ENCODE measurements at regions of chr19 and their contacts with region 1.

Region 1: GRCh38 chr19:45485305-45486077 is 11.4 kb downstream of the RTN2 start:
- DNase-seq: peak; percentile 93 to 97 (median 95)
- H3K4me3 ChIP-seq: peak overlapping the region; percentile 66 to 88
- H3K4me3 Mint-ChIP-seq: peak overlapping the region; percentile 91 to 97 (median 93)
- H3K27ac ChIP-seq: peak overlapping the region; percentile 34
- H3K27ac Mint-ChIP-seq: peak overlapping the region; percentile 72 to 94 (median 89)
- H3K4me1 ChIP-seq: peaks cover 5% of the 10 kb centered on the region
- H3K4me1 Mint-ChIP-seq: peaks cover 0 to 11% (median 7%) of the 10 kb centered on the region in 4 donors
- H3K27me3 ChIP-seq: no peaks in the 10 kb centered on the region
- H3K27me3 Mint-ChIP-seq: peaks cover 2 to 3% of the 10 kb centered on the region in 2 donors

Region 2: DNA sequence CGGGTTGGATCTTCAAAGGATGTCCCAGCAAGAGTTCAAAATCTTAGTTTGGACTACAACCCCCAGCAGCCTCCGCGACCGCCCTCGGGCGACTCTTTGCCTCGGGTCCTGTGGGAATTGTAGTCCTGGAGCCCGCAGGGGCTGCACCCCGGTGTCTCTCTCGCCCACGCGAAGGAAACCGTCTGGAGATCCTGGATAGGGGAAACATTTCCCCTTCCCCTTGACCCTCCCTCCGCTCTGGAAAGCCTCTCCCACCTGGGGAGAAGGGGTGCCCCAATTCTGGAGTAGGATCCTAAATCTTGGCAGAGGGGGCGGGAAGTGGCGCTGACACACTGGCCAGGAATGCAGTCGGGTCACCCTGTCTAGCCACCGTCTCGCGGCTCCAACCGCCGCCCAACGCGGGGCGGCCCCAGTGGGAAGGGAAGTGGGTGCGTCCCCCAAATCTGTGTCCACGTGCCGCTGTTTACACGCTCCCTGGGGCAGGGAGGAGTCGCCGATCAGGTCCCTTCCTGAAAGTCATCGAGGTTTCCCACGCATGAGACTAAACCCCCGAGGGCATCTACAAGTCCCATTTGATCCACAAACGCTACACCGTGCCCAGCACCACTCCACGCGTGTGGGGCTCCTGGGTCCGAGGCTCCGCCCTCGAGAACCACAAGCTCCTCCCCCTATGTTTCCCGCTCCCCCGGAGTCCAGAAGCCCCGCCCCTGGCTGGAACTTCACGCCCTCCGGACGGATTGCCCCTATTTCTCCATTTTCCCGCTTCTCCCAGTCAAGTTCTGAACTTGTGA is 79.9 kb before region 1 on chr19:
- CTCF ChIA-PET with region 1: no interaction called
- POLR2A ChIA-PET with region 1: no interaction called
- intact Hi-C with region 1: loop called (anchors 1 kb)
- DNase-seq: peak; percentile 80 to 91 (median 82)
- H3K4me3 ChIP-seq: peak overlapping the region; percentile 91 to 94
- H3K4me3 Mint-ChIP-seq: peak overlapping the region; percentile 90 to 99 (median 97)
- H3K27ac ChIP-seq: peak overlapping the region; percentile 65
- H3K27ac Mint-ChIP-seq: peak overlapping the region; percentile 69 to 99 (median 96)
- H3K4me1 ChIP-seq: peaks cover 35% of the 10 kb centered on the region
- H3K4me1 Mint-ChIP-seq: peaks cover 13 to 35% (median 26%) of the 10 kb centered on the region in 4 donors
- H3K27me3 ChIP-seq: peaks cover 16% of the 10 kb centered on the region
- H3K27me3 Mint-ChIP-seq: peaks cover 12 to 22% of the 10 kb centered on the region in 2 donors

Region 3: GRCh38 chr19:45450012-45450333 is 35.5 kb before region 1 on chr19:
- CTCF ChIA-PET with region 1: interaction called, 15 read pairs
- POLR2A ChIA-PET with region 1: no interaction called
- intact Hi-C with region 1: no loop called
- DNase-seq: peak in 3 of 5 donors; percentile 61 to 69 (median 64)
- H3K4me3 ChIP-seq: peak overlapping the region; percentile 45 to 50
- H3K4me3 Mint-ChIP-seq: peak overlapping the region; percentile 93 to 97 (median 96)
- H3K27ac ChIP-seq: peak overlapping the region; percentile 99
- H3K27ac Mint-ChIP-seq: peak overlapping the region; percentile 99 to 100 (median 100)
- H3K4me1 ChIP-seq: peaks cover 42% of the 10 kb centered on the region
- H3K4me1 Mint-ChIP-seq: peaks cover 36 to 75% (median 49%) of the 10 kb centered on the region in 4 donors
- H3K27me3 ChIP-seq: no peaks in the 10 kb centered on the region
- H3K27me3 Mint-ChIP-seq: peaks cover 0 to 4% of the 10 kb centered on the region in 2 donors

Region 4: DNA sequence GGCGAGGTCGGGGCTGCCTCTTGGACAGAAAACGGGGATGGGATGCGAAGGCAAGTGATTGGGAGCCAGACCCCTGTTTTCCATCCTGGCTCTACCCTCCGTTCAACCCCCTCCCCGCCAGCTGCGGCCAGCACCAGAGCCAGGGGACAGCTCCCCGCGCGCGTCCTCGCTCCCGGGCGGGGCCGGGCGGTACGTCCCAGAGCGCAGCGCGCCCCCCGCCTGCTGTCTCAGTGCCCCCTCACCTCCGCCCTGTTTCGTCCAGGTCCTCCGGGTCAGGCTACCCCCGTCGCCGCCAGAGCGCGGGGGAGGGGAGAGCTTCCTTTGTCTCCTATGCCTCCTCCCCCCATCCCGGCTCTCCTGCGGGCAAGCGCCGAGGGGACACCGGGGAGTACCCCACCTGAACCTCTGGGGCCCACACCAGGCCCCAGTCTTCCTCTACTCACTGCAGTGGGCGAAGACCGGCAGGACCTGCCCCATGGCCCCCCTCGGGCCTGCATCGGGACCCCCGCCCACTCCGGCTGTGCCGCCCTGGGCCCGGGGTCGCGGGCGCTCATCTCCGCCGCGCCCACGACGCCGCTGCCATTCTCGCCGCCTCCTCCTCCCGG is 11.0 kb after region 1 on chr19:
- CTCF ChIA-PET with region 1: interaction called, 52 read pairs
- POLR2A ChIA-PET with region 1: interaction called, 7 read pairs
- intact Hi-C with region 1: no loop called
- DNase-seq: peak; percentile 26 to 55 (median 44)
- H3K4me3 ChIP-seq: peak overlapping the region; percentile 23 to 54
- H3K4me3 Mint-ChIP-seq: peak overlapping the region; percentile 57 to 79 (median 69)
- H3K27ac ChIP-seq: no peak overlapping the region
- H3K27ac Mint-ChIP-seq: peak overlapping the region in 1 of 7 donors; percentile 91
- H3K4me1 ChIP-seq: peaks cover 44% of the 10 kb centered on the region
- H3K4me1 Mint-ChIP-seq: peaks cover 23 to 58% (median 41%) of the 10 kb centered on the region in 4 donors
- H3K27me3 ChIP-seq: peaks cover 10% of the 10 kb centered on the region
- H3K27me3 Mint-ChIP-seq: peaks cover 5 to 7% of the 10 kb centered on the region in 2 donors

Region 5: DNA sequence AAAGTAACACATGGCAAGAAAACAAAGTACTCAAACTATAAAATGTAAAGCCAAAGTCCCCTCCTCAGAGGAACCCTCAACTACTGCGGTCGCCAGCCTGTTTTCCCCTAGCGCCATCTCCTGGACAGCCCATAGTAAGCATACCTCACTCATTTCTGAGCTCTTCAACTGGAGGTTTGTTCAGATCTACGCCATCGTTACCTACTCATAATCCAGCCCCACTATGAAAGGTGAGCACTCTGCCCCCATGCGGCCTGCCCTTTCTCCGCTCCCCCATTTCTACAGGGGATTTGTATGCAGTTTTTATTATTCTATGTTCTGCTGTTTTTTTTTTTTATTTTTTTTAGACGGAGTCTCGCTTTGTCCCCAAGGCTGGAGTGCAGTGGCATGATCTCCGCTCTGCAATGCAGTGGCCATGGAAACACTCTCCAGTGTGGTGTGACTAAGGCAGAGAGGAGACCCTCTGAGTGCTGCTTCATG is 72.9 kb after region 1 on chr19:
- CTCF ChIA-PET with region 1: interaction called, 11 read pairs
- POLR2A ChIA-PET with region 1: no interaction called
- intact Hi-C with region 1: no loop called
- DNase-seq: peak; percentile 73 to 78 (median 76)
- H3K4me3 ChIP-seq: no peak overlapping the region
- H3K4me3 Mint-ChIP-seq: peak overlapping the region in 1 of 8 donors; percentile 34
- H3K27ac ChIP-seq: no peak overlapping the region
- H3K27ac Mint-ChIP-seq: peak overlapping the region in 4 of 7 donors; percentile 5 to 59 (median 34)
- H3K4me1 ChIP-seq: peaks cover 25% of the 10 kb centered on the region
- H3K4me1 Mint-ChIP-seq: peaks cover 9 to 32% (median 16%) of the 10 kb centered on the region in 4 donors
- H3K27me3 ChIP-seq: no peaks in the 10 kb centered on the region
- H3K27me3 Mint-ChIP-seq: no peaks in the 10 kb centered on the region

Region 6: DNA sequence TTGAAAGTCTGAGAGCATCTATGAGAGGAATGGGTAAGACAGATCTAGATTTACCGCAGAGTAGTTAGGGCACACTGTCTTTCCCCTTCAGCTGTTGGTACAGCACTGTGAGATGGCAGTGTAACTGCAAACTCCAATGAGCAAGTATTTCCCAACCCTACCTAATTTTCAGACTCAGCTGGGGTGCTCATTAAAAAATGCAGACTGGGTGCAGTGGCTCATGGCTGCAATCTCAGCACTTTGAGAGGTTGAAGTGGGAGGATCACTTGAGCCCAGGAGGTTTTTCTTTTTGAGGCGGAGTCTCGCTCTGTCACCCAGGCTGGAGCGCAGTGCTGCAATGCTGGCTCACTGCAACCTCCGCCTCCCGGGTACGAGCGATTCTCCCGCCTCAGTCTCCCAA is 219.6 kb after region 1 on chr19:
- CTCF ChIA-PET with region 1: no interaction called
- POLR2A ChIA-PET with region 1: no interaction called
- intact Hi-C with region 1: no loop called
- DNase-seq: no peak
- H3K4me3 ChIP-seq: no peak overlapping the region
- H3K4me3 Mint-ChIP-seq: no peak overlapping the region
- H3K27ac ChIP-seq: no peak overlapping the region
- H3K27ac Mint-ChIP-seq: no peak overlapping the region
- H3K4me1 ChIP-seq: no peaks in the 10 kb centered on the region
- H3K4me1 Mint-ChIP-seq: peaks cover 0 to 5% (median 2%) of the 10 kb centered on the region in 4 donors
- H3K27me3 ChIP-seq: no peaks in the 10 kb centered on the region
- H3K27me3 Mint-ChIP-seq: no peaks in the 10 kb centered on the region